ENCODE measurements at regions of chr5 and their contacts with region 1.

Region 1: GRCh38 chr5:1097381-1097987 is 14.4 kb downstream of the SLC12A7 start:
- DNase-seq: no peak
- H3K4me3 Mint-ChIP-seq: no peak overlapping the region
- H3K27ac Mint-ChIP-seq: no peak overlapping the region
- H3K4me1 Mint-ChIP-seq: peaks cover 7% of the 10 kb centered on the region
- H3K27me3 Mint-ChIP-seq: no peaks in the 10 kb centered on the region

Region 2: DNA sequence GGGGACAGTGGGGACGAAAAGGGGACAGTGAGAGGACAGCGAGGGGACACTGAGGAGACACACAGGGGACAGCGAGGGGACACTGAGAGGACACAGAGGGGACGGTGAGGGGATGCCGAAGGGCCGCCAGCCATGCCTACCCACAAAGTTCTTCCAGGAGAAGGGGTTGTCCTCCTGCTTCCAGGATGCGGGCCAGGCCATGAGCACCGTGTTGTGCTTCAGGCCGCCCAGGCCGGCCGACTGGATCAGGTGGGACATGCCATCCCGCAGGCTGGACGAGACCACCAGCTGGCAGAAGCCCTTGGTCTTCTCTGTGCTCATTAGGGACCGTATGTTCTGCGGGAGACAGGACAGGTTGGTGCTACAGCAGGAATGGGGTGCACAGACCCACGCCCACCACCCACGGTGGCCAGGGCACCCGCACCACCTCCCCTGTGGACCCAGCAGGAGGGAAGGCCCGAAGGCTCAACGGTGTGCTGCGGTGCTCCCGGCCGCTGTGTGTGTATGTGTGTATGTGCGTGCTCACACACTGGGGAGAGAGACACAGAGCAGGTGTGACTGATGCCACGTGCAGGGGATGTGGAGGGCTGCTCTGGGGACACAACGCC is 32.2 kb before region 1 on chr5:
- intact Hi-C with region 1: loop called (anchors 2 kb)
- DNase-seq: no peak
- H3K4me3 Mint-ChIP-seq: no peak overlapping the region
- H3K27ac Mint-ChIP-seq: no peak overlapping the region
- H3K4me1 Mint-ChIP-seq: no peaks in the 10 kb centered on the region
- H3K27me3 Mint-ChIP-seq: no peaks in the 10 kb centered on the region

Region 3: DNA sequence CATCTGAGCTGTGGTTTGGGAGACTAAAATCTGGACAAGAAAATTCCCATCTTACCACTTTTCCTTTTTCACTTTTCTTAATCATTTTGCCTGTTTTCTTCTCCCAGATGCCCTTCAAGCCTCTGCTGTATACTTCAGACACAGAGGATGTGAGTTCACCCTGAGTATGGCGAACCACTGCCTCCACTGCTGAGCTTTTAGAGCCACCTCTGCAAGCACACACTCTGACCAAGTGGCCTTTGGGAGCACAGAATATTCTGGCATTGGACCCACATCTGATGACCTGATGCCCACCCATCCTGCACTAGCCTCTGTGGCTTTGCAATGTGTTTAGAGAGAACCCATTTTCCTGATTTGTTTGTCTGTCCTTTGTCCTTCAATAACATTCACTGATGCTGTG is 164.9 kb after region 1 on chr5:
- intact Hi-C with region 1: no loop called
- DNase-seq: no peak
- H3K4me3 Mint-ChIP-seq: no peak overlapping the region
- H3K27ac Mint-ChIP-seq: no peak overlapping the region
- H3K4me1 Mint-ChIP-seq: no peaks in the 10 kb centered on the region
- H3K27me3 Mint-ChIP-seq: no peaks in the 10 kb centered on the region

Measured in activated T-helper 2 cell treated with anti-CD3 and anti-CD28 coated beads, Interferon-gamma antibody, Interleukin-2, Interleukin-4, amounts not matched to agents 10 μg/mL and 5 μg/mL and 100 μg/mL, durations not matched to agents 14 hours and 24 hours and 36 hours (primary cell).